Caco-2 (cell line): ENCODE measurements at regions of chr12 and their contacts with region 1.

Region 1: GRCh38 chr12:26832822-26833742 is at the start of gene ITPR2:
- DNase-seq: peak; percentile 98 to 99
- H3K4me3 ChIP-seq: peak within 1 kb of the TSS; percentile 97
- H3K4me3 Mint-ChIP-seq: peak within 1 kb of the TSS; percentile 87
- H3K27ac Mint-ChIP-seq: peak within 1 kb of the TSS; percentile 86
- H3K4me1 ChIP-seq: 0 out of 2 replicates have a peak, but pooled peaks cover 8% of the 10 kb centered on the region
- H3K4me1 Mint-ChIP-seq: peaks cover 16% of the 10 kb centered on the region
- H3K27me3 ChIP-seq: no peaks in the 10 kb centered on the region
- H3K27me3 Mint-ChIP-seq: no peaks in the 10 kb centered on the region
- CTCF ChIP-seq: peak; percentile 18 to 36
- total RNA-seq, gene ITPR2: 41.6 and 51.5 TPM in 2 replicates

Region 2: DNA sequence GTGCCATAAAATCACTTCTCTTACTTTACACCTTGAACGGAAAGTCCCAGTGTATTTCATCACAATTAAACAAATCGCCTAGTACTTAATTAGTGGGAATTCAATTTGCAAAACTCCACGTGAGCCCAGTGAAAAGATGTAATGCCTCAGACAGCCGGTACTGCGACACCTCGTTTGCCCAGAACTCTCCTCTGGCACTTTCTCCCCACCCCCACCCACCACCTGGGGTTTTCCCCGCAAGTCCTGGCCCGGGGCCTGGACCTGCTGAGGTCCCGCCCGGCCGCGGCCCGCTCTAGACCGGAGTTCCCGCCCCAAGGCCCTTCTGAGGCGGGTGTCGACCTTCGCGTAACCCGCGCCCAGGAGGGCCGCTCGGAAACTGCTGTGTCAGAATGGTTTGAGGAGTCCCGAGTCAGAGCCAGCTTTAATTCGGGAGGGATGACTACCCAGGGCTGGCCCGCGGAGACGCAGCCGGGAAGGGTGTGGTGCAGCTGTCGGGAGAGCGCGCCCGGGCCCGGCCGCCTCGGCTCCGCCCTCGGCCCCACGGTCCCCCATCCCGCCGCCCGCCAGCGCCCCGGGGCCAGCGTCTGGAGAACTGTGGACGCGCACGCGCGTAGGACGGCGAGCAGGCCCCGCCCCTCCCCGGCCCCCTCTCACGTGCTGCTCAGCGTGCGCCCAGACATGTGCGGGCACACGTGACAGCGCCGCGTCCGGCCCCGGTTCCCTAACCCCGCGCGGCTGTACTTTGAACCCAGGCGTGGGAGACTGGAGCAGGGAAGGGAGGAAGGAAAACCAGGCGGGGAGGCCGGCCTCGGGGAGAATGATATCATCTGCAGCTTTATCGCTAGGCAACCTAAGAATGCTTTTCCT is 719.0 kb before region 1 on chr12:
- CTCF ChIA-PET with region 1: interaction called, 5 read pairs
- POLR2A ChIA-PET with region 1: no interaction called
- intact Hi-C with region 1: loop called (anchors 10 kb)
- DNase-seq: peak; percentile 98
- H3K4me3 ChIP-seq: peak overlapping the region; percentile 77
- H3K4me3 Mint-ChIP-seq: peak overlapping the region; percentile 78
- H3K27ac Mint-ChIP-seq: peak overlapping the region; percentile 90
- H3K4me1 ChIP-seq: peaks cover 23% of the 10 kb centered on the region
- H3K4me1 Mint-ChIP-seq: peaks cover 18% of the 10 kb centered on the region
- H3K27me3 ChIP-seq: no peaks in the 10 kb centered on the region
- H3K27me3 Mint-ChIP-seq: peaks cover 2% of the 10 kb centered on the region
- CTCF ChIP-seq: peak; percentile 12 to 48

Region 3: GRCh38 chr12:26768611-26769603 is 64.2 kb before region 1 on chr12:
- CTCF ChIA-PET with region 1: no interaction called
- POLR2A ChIA-PET with region 1: no interaction called
- intact Hi-C with region 1: loop called (anchors 2 kb)
- DNase-seq: peak in 1 of 2 experiments; percentile 51
- H3K4me3 ChIP-seq: no peak overlapping the region
- H3K4me3 Mint-ChIP-seq: no peak overlapping the region
- H3K27ac Mint-ChIP-seq: peak overlapping the region; percentile 17
- H3K4me1 ChIP-seq: peaks cover 12% of the 10 kb centered on the region
- H3K4me1 Mint-ChIP-seq: peaks cover 12% of the 10 kb centered on the region
- H3K27me3 ChIP-seq: no peaks in the 10 kb centered on the region
- H3K27me3 Mint-ChIP-seq: no peaks in the 10 kb centered on the region
- CTCF ChIP-seq: no peak

Region 4: DNA sequence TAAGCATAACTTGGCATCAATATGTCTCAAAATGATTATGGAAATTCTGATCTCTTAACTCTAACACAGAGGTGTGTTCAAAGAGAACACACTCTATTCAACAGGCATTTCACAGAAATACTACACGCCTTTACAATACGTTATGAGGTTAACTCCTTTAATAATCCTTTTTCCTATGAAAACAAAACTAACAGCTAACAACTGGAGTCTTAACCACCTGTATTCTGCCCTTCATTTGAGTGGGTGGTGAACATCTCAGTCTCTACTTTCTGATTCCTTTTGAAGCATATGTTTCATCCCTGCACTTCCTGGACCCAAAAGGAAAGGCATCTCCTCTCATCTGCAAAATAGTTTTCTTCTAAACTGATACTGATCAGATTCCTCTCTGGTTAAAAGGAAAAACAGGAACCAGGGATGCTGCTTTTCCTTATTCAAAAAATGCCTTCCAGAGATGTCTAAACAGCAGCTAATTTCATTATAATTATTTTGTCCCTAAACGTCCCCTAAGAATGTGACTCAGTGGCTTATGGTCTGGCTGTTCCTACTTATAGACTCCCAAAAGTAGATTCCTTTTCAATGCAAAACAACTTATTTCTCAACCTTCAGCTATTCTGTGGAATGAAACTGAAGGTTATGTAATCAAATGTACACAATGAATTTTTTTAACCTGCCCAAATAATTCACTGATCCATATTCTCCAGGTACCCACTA is 24.2 kb before region 1 on chr12:
- CTCF ChIA-PET with region 1: no interaction called
- POLR2A ChIA-PET with region 1: interaction called, 3 read pairs
- intact Hi-C with region 1: loop called (anchors 2 kb)
- DNase-seq: no peak
- H3K4me3 ChIP-seq: no peak overlapping the region
- H3K4me3 Mint-ChIP-seq: no peak overlapping the region
- H3K27ac Mint-ChIP-seq: no peak overlapping the region
- H3K4me1 ChIP-seq: 0 out of 2 replicates have a peak, but pooled peaks cover 6% of the 10 kb centered on the region
- H3K4me1 Mint-ChIP-seq: peaks cover 17% of the 10 kb centered on the region
- H3K27me3 ChIP-seq: no peaks in the 10 kb centered on the region
- H3K27me3 Mint-ChIP-seq: no peaks in the 10 kb centered on the region
- CTCF ChIP-seq: no peak

Region 5: DNA sequence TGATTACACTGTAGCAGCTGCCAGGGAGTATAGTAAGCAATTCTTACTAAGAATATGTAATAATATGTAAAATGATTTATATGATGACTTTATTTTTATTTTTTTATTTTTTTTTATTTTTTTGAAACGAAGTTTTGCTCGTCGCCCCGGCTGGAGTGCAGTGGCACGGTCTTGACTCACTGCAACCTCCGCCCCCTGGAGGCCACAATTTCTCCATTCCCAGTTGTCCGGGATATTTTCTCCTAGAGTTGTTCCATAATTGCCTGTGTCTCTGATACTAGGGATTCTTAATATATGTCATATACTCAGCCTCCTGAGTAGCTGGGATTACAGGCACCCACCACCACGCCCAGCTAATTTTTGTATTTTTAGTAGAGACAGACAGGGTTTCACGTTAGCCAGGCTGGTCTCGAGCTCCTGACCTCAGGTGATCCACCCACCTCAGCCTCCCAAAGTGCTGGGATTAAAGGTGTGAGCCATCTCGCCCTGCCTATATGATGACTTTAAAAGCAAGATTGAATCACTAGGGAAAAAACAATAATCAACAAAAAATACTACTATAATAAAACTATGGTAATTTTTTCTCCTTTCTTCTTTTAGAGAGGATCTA is 12.1 kb after region 1 on chr12:
- CTCF ChIA-PET with region 1: interaction called, 33 read pairs
- POLR2A ChIA-PET with region 1: interaction called, 12 read pairs
- intact Hi-C with region 1: loop called (anchors 1 kb)
- DNase-seq: peak; percentile 67 to 84
- H3K4me3 ChIP-seq: no peak overlapping the region
- H3K4me3 Mint-ChIP-seq: no peak overlapping the region
- H3K27ac Mint-ChIP-seq: no peak overlapping the region
- H3K4me1 ChIP-seq: peaks cover 14% of the 10 kb centered on the region
- H3K4me1 Mint-ChIP-seq: peaks cover 22% of the 10 kb centered on the region
- H3K27me3 ChIP-seq: no peaks in the 10 kb centered on the region
- H3K27me3 Mint-ChIP-seq: no peaks in the 10 kb centered on the region
- CTCF ChIP-seq: peak; percentile 87 to 91

Region 6: DNA sequence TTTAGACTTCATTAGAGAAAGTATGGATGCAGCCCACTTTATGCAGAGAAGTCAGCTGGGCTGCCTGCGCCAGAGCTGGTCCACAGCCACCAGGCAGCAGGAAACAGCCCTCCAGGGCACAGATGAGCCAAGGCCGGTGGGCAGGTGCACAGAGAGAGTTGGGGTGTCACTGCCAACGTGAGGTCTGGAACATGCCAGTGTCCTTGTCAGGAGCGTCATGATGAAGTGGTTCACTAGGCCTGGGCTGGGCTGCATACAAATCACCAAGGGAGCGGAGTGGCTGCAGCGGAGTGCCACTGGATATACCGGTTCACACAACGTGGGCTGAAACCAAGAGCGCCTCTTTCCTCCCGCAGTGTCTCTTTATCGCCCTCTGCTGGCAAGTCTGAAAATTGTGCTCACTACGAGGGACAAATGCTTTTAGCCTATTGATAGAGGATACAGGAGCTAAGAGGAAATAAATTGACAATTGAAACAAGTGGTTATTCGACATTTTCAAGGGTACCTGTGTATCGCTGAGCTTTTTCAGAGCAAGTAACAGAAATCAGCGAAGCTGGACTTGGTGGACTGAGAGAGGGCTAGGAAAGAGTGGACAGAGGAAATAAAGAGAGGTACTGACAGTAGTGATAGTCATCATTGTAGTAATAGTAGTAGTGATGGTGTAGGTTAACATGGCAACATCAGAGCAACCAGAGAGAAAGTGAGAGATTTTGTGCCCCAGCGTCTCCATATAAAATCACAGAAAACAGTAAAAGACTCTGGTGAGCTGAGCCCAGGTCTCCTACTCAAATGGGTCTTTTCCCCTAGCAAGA is 51.9 kb after region 1 on chr12:
- CTCF ChIA-PET with region 1: interaction called, 27 read pairs
- POLR2A ChIA-PET with region 1: no interaction called
- intact Hi-C with region 1: loop called (anchors 1 kb)
- DNase-seq: peak; percentile 90 to 92
- H3K4me3 ChIP-seq: no peak overlapping the region
- H3K4me3 Mint-ChIP-seq: no peak overlapping the region
- H3K27ac Mint-ChIP-seq: no peak overlapping the region
- H3K4me1 ChIP-seq: no peaks in the 10 kb centered on the region
- H3K4me1 Mint-ChIP-seq: no peaks in the 10 kb centered on the region
- H3K27me3 ChIP-seq: no peaks in the 10 kb centered on the region
- H3K27me3 Mint-ChIP-seq: no peaks in the 10 kb centered on the region
- CTCF ChIP-seq: peak; percentile 98 to 99

Region 7: GRCh38 chr12:27198036-27198435 is 365.0 kb after region 1 on chr12:
- CTCF ChIA-PET with region 1: no interaction called
- POLR2A ChIA-PET with region 1: no interaction called
- intact Hi-C with region 1: no loop called
- DNase-seq: no peak
- H3K4me3 ChIP-seq: no peak overlapping the region
- H3K4me3 Mint-ChIP-seq: no peak overlapping the region
- H3K27ac Mint-ChIP-seq: no peak overlapping the region
- H3K4me1 ChIP-seq: no peaks in the 10 kb centered on the region
- H3K4me1 Mint-ChIP-seq: no peaks in the 10 kb centered on the region
- H3K27me3 ChIP-seq: no peaks in the 10 kb centered on the region
- H3K27me3 Mint-ChIP-seq: no peaks in the 10 kb centered on the region
- CTCF ChIP-seq: no peak